ENCODE measurements at regions of chr1 and their contacts with region 1.

Region 1: DNA sequence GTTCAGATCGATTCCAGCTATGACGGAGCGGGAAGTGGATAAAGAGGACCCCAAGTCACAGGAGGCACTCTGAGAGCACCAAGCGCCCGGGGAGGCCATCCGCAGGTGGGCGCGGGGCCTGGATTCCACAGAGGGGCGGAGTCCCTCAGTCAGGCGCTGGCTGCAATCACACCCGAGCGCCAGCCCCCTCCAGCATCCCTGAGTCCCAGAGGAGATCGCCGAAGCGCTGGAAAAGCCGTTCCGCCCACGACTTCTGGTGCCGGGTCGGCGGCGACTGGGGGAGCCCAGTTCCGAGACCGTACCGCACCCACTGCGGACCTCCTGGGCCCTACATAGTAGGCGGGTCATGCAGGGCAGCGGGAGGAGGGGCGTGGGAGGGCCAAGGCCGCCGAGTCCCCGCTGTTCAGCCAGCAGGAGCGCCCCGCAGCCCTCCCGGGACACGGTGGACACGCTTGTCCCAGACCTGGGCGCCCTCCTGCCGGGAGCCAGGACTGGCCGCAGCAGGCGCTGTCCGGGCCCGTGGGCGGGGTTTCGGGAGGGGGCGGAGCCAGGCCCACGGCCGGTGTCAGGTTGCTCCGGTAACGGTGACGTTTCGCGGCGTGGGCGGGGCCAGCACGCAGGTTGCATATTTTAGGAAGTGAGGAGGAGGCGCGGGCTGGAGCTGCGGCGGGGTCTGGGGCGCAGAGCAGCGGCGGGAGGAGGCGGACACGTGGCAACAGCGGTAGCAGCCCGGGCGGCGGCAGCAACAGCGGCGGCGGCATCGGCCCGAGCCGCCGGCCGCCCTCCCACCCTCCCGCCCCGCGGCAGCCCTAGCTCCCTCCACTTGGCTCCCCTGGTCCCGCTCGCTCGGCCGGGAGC is at the start of gene ATP1A1:
- DNase-seq: peak; percentile 70
- ATAC-seq: peak; percentile 72
- H3K4me3 ChIP-seq: peak within 1 kb of the TSS; percentile 95
- H3K27ac ChIP-seq: peak within 1 kb of the TSS; percentile 96
- H3K4me1 ChIP-seq: 0 out of 2 replicates have a peak, but pooled peaks cover 7% of the 10 kb centered on the region
- H3K27me3 ChIP-seq: 0 out of 4 replicates have a peak, but pooled peaks cover 0 to 8% of the 10 kb centered on the region in 2 experiments
- CTCF ChIP-seq: peak; percentile 9 to 16 (median 14); a peak in 2 of 6 replicates
- EP300 ChIP-seq: peak in 1 of 2 experiments; percentile 56; a peak in 1 of 4 replicates
- POLR2A ChIP-seq: peak; percentile 98
- RAD21 ChIP-seq: no peak
- polyA plus RNA-seq, gene ATP1A1: 113 to 151 TPM

Region 2: GRCh38 chr1:116418091-116418830 is 45.4 kb after region 1 on chr1:
- CTCF ChIA-PET with region 1: interaction called, 4 read pairs
- POLR2A ChIA-PET with region 1: interaction called, 13 read pairs
- RAD21 ChIA-PET with region 1: interaction called, 30 read pairs
- SMC1A ChIA-PET with region 1: interaction called, 23 read pairs
- in situ Hi-C with region 1: no loop called
- intact Hi-C with region 1: loop called (anchors 2 kb)
- DNase-seq: peak; percentile 51
- ATAC-seq: peak; percentile 96
- H3K4me3 ChIP-seq: peak overlapping the region; percentile 96
- H3K27ac ChIP-seq: peak overlapping the region; percentile 89
- H3K4me1 ChIP-seq: peaks cover 11% of the 10 kb centered on the region
- H3K27me3 ChIP-seq: no peaks in the 10 kb centered on the region
- CTCF ChIP-seq: no peak
- EP300 ChIP-seq: no peak
- POLR2A ChIP-seq: peak; percentile 100
- RAD21 ChIP-seq: no peak